MCF 10A (cell line): ENCODE measurements at regions of chr2 and their contacts with region 1.

Region 1: DNA sequence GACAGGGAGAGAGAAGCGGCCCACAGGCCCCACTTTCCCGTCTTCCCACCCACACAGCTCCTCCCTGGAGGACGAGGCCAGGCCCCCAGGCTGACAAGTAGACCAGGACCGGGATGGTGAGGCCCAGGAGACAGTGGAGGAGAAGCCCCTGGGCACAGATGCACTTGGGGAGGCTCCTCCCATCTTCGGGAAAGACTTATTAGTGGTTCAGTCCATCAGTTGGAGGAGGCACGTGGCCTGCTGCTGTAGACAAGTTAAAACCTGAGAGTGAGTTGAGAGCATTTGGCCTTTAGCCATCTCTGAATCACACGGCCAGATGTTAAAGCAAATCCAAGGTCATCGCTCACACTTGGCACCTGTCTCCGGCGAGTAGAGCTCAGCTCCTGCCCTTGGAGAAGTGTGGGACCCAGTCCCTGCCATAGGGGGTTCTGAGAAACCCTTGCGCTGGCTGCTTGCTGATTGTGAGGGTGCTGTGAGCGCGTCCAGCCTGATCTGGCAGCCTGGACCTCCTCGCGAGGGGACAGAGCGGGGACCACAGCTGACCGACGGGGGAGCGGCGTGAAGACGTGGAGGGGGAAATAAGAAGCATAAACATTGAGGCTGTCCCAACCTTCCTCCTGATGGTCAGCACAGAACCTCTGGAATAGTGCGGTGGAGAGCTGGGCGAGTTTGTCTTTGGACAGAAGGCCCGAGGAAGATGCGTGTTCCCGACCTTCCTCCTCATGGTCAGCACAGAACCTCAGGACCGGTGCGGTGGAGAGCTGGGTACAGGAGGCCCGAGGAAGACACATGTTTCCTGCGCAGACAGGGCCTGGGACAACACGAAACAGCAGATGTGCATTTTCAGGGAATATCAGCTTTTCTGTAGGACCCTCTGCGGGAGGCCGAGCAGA is 24.7 kb upstream of the ALLC start:
- DNase-seq: peak; percentile 92
- H3K4me3 Mint-ChIP-seq: no peak overlapping the region
- H3K27ac Mint-ChIP-seq: peak overlapping the region; percentile 39
- H3K4me1 Mint-ChIP-seq: peaks cover 14% of the 10 kb centered on the region
- H3K27me3 Mint-ChIP-seq: no peaks in the 10 kb centered on the region
- CTCF ChIP-seq: no peak

Region 2: DNA sequence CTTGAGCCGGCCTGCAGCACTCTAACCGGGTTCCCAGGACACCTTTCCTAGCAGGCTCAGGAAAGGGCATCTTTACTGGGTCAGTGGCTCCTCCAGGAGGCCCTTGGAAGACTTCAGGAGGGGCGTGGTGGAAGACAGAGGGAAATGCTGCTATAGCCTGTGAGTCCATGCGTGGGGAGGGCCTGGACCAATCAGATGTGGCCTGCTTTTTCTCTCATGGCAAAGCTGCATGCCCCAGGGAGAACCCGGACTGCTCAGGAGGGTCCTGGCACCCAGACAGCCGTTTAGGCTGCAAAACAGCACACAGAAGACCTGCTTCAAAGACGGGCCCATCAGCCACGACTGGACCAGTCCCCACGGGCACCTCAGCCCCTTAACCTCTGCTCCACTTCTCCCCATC is 340.1 kb before region 1 on chr2:
- CTCF ChIA-PET with region 1: no interaction called
- POLR2A ChIA-PET with region 1: no interaction called
- intact Hi-C with region 1: no loop called
- DNase-seq: no peak
- H3K4me3 Mint-ChIP-seq: no peak overlapping the region
- H3K27ac Mint-ChIP-seq: no peak overlapping the region
- H3K4me1 Mint-ChIP-seq: no peaks in the 10 kb centered on the region
- H3K27me3 Mint-ChIP-seq: no peaks in the 10 kb centered on the region
- CTCF ChIP-seq: no peak

Region 3: DNA sequence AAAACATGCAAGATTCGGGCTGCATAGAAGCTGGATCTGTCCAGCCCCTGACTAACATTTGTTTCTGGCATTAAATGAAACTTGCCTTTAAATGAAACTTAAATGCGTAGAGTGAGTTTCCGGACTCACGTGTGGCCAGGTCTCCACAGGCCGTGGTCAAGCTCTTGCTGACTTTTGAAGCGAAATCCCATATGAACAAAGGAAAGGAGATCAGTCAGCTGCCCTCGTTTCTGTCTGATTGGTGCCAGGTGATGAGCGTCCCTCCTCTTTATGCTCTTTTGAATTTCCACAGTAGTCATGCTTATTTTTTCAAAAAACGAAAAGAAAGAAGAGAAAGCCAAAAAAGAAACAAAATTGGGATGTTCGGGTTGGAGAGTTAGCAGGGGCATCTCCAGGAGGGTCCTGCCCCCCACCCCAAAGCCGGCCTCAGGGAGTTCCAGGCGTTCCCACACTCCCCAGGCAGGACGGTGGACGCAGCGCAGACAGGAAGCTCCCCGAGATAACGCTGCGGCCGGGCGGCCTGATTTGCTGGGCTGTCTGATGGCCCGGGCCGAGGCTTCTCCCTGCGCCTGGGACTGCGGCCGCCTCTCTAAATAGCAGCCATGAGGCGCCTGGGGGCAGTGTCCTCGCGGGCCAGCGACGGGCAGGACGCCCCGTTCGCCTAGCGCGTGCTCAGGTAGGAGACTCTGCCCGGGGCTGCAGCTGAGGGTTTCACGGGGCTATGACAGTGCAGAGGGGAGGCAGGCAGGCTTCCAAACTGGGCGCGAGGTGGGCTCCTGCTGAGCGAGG is 38.6 kb before region 1 on chr2 and contains the start of gene COLEC11:
- CTCF ChIA-PET with region 1: no interaction called
- POLR2A ChIA-PET with region 1: no interaction called
- intact Hi-C with region 1: no loop called
- DNase-seq: no peak
- H3K4me3 Mint-ChIP-seq: no peak within 1 kb of the TSS
- H3K27ac Mint-ChIP-seq: no peak within 1 kb of the TSS
- H3K4me1 Mint-ChIP-seq: no peaks in the 10 kb centered on the region
- H3K27me3 Mint-ChIP-seq: peaks cover 11% of the 10 kb centered on the region
- CTCF ChIP-seq: no peak
- total RNA-seq, gene COLEC11: not detected in 2 replicates

Region 4: GRCh38 chr2:3620834-3621233 is 12.5 kb before region 1 on chr2:
- CTCF ChIA-PET with region 1: interaction called, 9 read pairs
- POLR2A ChIA-PET with region 1: interaction called, 25 read pairs
- intact Hi-C with region 1: no loop called
- DNase-seq: peak; percentile 42
- H3K4me3 Mint-ChIP-seq: peak overlapping the region; percentile 44
- H3K27ac Mint-ChIP-seq: peak overlapping the region; percentile 95
- H3K4me1 Mint-ChIP-seq: peaks cover 16% of the 10 kb centered on the region
- H3K27me3 Mint-ChIP-seq: no peaks in the 10 kb centered on the region
- CTCF ChIP-seq: no peak